ENCODE measurements at regions of chr6 and their contacts with region 1.

Region 1: GRCh38 chr6:137697267-137697938 is 169.7 kb upstream of the TNFAIP3 start:
- DNase-seq: peak; percentile 73 to 91
- H3K4me3 ChIP-seq: no peak overlapping the region
- H3K4me3 Mint-ChIP-seq: no peak overlapping the region
- H3K27ac Mint-ChIP-seq: peak overlapping the region; percentile 94
- H3K4me1 ChIP-seq: peaks cover 44% of the 10 kb centered on the region
- H3K4me1 Mint-ChIP-seq: peaks cover 27% of the 10 kb centered on the region
- H3K27me3 ChIP-seq: no peaks in the 10 kb centered on the region
- H3K27me3 Mint-ChIP-seq: no peaks in the 10 kb centered on the region
- CTCF ChIP-seq: peak; percentile 34 to 35

Region 2: GRCh38 chr6:137647762-137648447 is 49.5 kb before region 1 on chr6:
- CTCF ChIA-PET with region 1: interaction called, 17 read pairs
- POLR2A ChIA-PET with region 1: interaction called, 8 read pairs
- intact Hi-C with region 1: loop called (anchors 1 kb)
- DNase-seq: no peak
- H3K4me3 ChIP-seq: no peak overlapping the region
- H3K4me3 Mint-ChIP-seq: peak overlapping the region; percentile 66
- H3K27ac Mint-ChIP-seq: peak overlapping the region; percentile 90
- H3K4me1 ChIP-seq: peaks cover 36% of the 10 kb centered on the region
- H3K4me1 Mint-ChIP-seq: peaks cover 35% of the 10 kb centered on the region
- H3K27me3 ChIP-seq: no peaks in the 10 kb centered on the region
- H3K27me3 Mint-ChIP-seq: no peaks in the 10 kb centered on the region
- CTCF ChIP-seq: no peak

Region 3: DNA sequence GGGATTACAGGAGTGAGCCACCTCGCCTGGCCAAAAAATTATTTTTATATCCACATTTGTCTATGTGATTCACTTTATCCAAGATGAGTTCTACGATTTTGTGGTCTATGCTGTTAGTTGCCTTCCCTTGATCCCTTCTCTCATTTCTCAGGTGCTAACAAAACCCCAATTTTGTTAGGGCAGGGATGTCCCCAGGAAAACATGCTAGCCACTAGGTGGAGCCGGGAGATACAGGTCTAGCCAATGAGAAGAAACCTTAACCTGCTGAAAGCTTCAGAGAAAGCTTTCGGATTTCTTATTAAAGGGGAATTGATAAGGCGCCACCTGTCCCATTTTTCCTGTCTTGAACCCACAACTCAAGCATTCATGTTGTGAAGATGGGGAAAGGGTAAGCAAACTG is 35.8 kb before region 1 on chr6:
- CTCF ChIA-PET with region 1: interaction called, 5 read pairs
- POLR2A ChIA-PET with region 1: no interaction called
- intact Hi-C with region 1: loop called (anchors 1 kb)
- DNase-seq: peak; percentile 42 to 44
- H3K4me3 ChIP-seq: no peak overlapping the region
- H3K4me3 Mint-ChIP-seq: no peak overlapping the region
- H3K27ac Mint-ChIP-seq: no peak overlapping the region
- H3K4me1 ChIP-seq: peaks cover 52% of the 10 kb centered on the region
- H3K4me1 Mint-ChIP-seq: peaks cover 17% of the 10 kb centered on the region
- H3K27me3 ChIP-seq: no peaks in the 10 kb centered on the region
- H3K27me3 Mint-ChIP-seq: no peaks in the 10 kb centered on the region
- CTCF ChIP-seq: peak; percentile 15 to 27

Measured in Caco-2 (cell line).